ENCODE measurements at regions of chr1 and their contacts with region 1.

Region 1: GRCh38 chr1:198620951-198621824 is 17.7 kb upstream of the PTPRC start:
- DNase-seq: peak; percentile 84
- H3K4me3 Mint-ChIP-seq: peak overlapping the region; percentile 82
- H3K27ac Mint-ChIP-seq: peak overlapping the region; percentile 99
- H3K4me1 Mint-ChIP-seq: peaks cover 85% of the 10 kb centered on the region
- H3K27me3 Mint-ChIP-seq: no peaks in the 10 kb centered on the region

Region 2: DNA sequence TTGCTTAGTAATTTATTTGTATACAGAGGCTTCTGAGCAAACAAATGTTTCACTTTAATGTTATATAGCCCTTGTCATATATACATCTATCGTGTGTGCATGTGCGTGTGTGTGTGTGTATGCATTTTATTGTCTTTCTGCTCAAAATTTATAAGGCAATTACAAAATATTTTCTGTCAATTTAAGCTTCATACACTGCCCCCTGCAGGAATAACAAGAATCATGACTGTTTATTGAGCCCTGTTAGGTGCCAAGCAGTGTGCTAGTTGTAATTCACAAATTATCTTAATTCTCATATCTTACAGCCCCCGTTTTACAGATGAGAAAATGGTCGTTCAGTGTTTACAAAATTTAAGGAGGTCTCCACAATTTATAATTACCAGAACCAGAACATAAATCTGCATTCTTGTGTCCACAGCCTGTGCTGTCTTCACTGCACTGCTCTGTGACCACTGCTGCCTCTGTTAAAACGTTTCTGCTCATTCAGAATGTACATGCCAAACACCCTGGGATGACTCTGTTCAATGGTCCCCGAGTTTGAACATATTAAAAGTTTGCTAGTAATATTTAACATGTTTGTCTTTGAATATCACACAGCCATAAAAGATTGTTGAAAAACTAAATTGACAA is 262.0 kb before region 1 on chr1:
- CTCF ChIA-PET with region 1: no interaction called
- POLR2A ChIA-PET with region 1: no interaction called
- DNase-seq: no peak
- H3K4me3 Mint-ChIP-seq: no peak overlapping the region
- H3K27ac Mint-ChIP-seq: no peak overlapping the region
- H3K4me1 Mint-ChIP-seq: peaks cover 11% of the 10 kb centered on the region
- H3K27me3 Mint-ChIP-seq: peaks cover 4% of the 10 kb centered on the region

Region 3: DNA sequence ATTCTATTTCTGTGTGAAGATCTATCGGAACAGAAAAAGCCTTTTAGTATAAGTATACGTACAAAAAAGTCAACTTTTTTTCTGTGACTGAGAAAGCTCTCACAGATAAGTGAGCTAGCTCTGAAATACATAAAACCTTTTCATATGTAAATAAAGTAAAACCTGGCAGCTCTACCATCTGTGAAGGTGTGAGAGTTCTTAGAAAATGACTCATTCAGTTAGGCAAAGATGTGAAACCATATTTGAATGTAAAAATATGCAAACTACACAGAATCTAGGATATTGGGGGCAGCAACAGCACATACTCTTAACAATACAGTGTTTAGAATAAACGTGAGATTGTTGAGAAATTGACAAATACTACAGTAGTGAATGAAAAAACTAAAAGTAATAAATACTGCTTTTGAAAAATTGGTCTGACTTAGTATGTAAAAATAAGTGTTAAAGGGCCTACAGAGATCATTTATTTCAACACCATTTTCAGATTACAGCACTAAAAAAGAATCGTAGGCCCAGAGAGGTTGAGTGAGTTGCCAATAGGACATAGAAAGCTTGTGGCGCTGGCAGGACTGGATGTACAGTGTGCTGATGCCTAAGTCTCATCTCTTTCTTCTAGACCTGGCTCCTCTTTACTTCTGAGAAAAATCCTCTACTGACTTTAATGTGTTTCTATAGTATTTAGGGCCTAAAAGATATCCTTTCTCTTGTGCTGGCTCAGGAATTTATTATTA is 100.5 kb before region 1 on chr1:
- CTCF ChIA-PET with region 1: interaction called, 14 read pairs
- POLR2A ChIA-PET with region 1: interaction called, 55 read pairs
- DNase-seq: no peak
- H3K4me3 Mint-ChIP-seq: peak overlapping the region; percentile 53
- H3K27ac Mint-ChIP-seq: peak overlapping the region; percentile 81
- H3K4me1 Mint-ChIP-seq: peaks cover 63% of the 10 kb centered on the region
- H3K27me3 Mint-ChIP-seq: no peaks in the 10 kb centered on the region

Region 4: GRCh38 chr1:198598796-198599321 is 22.3 kb before region 1 on chr1:
- CTCF ChIA-PET with region 1: no interaction called
- POLR2A ChIA-PET with region 1: interaction called, 14 read pairs
- DNase-seq: peak; percentile 29
- H3K4me3 Mint-ChIP-seq: no peak overlapping the region
- H3K27ac Mint-ChIP-seq: peak overlapping the region; percentile 76
- H3K4me1 Mint-ChIP-seq: peaks cover 56% of the 10 kb centered on the region
- H3K27me3 Mint-ChIP-seq: no peaks in the 10 kb centered on the region

Region 5: DNA sequence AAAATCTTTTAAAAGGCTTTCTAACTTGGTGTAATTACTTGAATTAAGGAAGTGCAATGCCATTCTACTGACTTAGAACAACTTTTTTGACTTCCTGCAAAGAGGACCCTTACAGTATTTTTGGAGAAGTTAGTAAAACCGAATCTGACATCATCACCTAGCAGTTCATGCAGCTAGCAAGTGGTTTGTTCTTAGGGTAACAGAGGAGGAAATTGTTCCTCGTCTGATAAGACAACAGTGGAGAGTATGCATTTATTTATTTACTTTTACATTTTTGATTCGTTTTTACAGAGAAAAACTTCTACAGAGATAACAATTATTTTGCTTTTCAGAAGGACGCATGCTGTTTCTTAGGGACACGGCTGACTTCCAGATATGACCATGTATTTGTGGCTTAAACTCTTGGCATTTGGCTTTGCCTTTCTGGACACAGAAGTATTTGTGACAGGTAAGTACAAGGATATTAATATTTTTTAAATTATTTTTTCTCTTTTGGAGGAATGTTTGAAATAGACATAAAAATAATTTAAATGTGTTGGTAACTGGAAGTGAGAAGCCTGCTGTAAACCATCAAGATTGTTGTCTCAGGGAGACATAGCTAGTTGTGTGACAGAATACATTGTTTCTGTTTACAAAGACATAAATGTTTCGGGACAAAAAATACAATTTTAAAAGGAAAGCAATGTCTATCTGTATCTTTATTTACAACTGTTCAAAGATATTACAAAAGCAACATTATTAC is 17.9 kb after region 1 on chr1 and contains the start of gene PTPRC:
- CTCF ChIA-PET with region 1: interaction called, 99 read pairs
- POLR2A ChIA-PET with region 1: interaction called, 512 read pairs
- DNase-seq: no peak
- H3K4me3 Mint-ChIP-seq: peak within 1 kb of the TSS; percentile 94
- H3K27ac Mint-ChIP-seq: peak within 1 kb of the TSS; percentile 98
- H3K4me1 Mint-ChIP-seq: peaks cover 50% of the 10 kb centered on the region
- H3K27me3 Mint-ChIP-seq: no peaks in the 10 kb centered on the region
- total RNA-seq, gene PTPRC: 724 to 731 TPM

Region 6: DNA sequence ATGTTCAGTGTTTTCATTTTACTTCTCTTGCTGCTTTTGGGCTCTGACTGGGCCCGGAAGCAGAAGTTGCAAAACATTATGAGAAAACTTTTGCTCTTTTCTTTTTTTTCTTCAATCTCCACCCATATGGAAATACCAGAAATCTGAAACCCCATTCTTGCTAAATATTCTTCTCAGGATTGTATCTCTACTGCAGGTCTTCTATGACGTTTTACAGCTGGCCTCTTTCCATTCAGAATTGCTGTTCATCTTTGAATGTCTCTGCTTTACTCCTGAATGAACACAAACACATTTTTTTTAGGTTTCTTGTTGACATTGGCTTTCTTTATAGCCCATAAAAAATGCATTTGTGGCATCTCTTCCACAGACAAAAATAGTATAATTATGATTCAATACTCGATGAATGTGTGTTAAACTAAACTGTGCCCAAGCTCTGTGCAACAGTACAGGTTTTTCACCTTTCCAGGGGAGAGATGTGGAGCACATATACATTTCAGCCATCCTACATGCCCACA is 36.4 kb after region 1 on chr1:
- CTCF ChIA-PET with region 1: interaction called, 5 read pairs
- POLR2A ChIA-PET with region 1: interaction called, 100 read pairs
- DNase-seq: no peak
- H3K4me3 Mint-ChIP-seq: peak overlapping the region; percentile 65
- H3K27ac Mint-ChIP-seq: peak overlapping the region; percentile 81
- H3K4me1 Mint-ChIP-seq: peaks cover 71% of the 10 kb centered on the region
- H3K27me3 Mint-ChIP-seq: no peaks in the 10 kb centered on the region